ENCODE measurements at regions of chrX and their contacts with region 1.

Region 1: DNA sequence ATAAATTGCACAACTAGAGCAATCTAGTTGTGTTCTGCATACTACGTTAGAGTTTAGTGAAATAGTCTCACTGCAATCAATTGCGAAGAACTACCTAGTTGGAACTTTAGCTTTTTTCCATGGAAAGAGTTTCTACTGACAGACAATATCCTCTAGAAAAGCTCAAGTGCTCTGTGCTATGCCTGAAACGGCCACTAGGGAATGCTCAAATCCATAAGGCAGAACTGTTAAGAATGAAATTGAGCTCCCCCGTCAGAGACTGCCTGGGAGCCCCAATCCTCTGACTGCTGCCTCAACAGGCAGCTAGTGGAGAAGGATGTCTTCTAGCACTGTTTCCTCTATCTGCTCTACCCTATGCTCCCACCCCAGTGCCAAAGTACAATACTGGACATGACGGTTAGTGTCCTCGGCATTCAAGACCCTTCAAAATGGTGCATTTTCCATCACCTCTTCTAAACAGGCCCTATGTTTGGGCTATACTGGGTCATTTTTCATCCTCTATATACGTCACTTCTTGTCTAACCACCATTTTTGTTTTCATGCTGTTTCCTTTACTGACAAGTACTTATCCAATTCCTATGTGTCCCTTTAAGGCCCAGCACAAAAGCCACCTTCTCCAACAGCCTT is 35.3 kb downstream of the FRMD7 start:
- DNase-seq: peak; percentile 8 to 56 (median 30)
- H3K4me3 ChIP-seq: no peak overlapping the region
- H3K4me3 Mint-ChIP-seq: no peak overlapping the region
- H3K27ac ChIP-seq: no peak overlapping the region
- H3K27ac Mint-ChIP-seq: no peak overlapping the region
- H3K4me1 ChIP-seq: no peaks in the 10 kb centered on the region
- H3K4me1 Mint-ChIP-seq: peaks cover 7 to 12% (median 10%) of the 10 kb centered on the region in 3 donors
- H3K27me3 ChIP-seq: no peaks in the 10 kb centered on the region
- H3K27me3 Mint-ChIP-seq: peaks cover 0 to 13% of the 10 kb centered on the region in 2 donors

Region 2: DNA sequence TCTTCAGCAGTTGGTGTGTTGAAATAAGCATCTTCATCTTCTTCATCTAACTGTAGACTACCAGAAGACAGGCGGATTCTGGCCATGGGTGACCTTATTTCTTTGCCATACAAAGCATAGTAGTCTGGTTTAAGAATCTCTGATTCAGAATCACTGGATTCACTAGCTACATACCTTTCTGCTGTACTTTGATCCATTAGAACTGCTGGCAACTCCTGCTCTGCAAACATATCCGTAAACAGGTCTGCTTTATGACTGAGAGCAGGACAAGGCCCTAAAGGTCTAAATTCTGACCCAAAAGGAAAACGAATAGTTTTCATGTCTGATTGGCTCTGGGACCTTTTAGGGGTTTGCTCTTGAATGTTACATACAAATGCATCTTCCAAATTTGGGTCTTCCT is 14.6 kb before region 1 on chrX:
- CTCF ChIA-PET with region 1: no interaction called
- POLR2A ChIA-PET with region 1: no interaction called
- DNase-seq: no peak
- H3K4me3 ChIP-seq: no peak overlapping the region
- H3K4me3 Mint-ChIP-seq: no peak overlapping the region
- H3K27ac ChIP-seq: no peak overlapping the region
- H3K27ac Mint-ChIP-seq: no peak overlapping the region
- H3K4me1 ChIP-seq: no peaks in the 10 kb centered on the region
- H3K4me1 Mint-ChIP-seq: no peaks in the 10 kb centered on the region
- H3K27me3 ChIP-seq: no peaks in the 10 kb centered on the region
- H3K27me3 Mint-ChIP-seq: peaks cover 0 to 6% of the 10 kb centered on the region in 2 donors

Region 3: GRCh38 chrX:132114615-132115014 is 22.1 kb after region 1 on chrX:
- CTCF ChIA-PET with region 1: no interaction called
- POLR2A ChIA-PET with region 1: no interaction called
- DNase-seq: no peak
- H3K4me3 ChIP-seq: no peak overlapping the region
- H3K4me3 Mint-ChIP-seq: no peak overlapping the region
- H3K27ac ChIP-seq: no peak overlapping the region
- H3K27ac Mint-ChIP-seq: no peak overlapping the region
- H3K4me1 ChIP-seq: no peaks in the 10 kb centered on the region
- H3K4me1 Mint-ChIP-seq: no peaks in the 10 kb centered on the region
- H3K27me3 ChIP-seq: no peaks in the 10 kb centered on the region
- H3K27me3 Mint-ChIP-seq: peaks cover 0 to 7% of the 10 kb centered on the region in 2 donors

Region 4: GRCh38 chrX:132219343-132219768 is 126.8 kb after region 1 on chrX and contains the start of gene RAP2C:
- CTCF ChIA-PET with region 1: interaction called, 20 read pairs
- POLR2A ChIA-PET with region 1: no interaction called
- DNase-seq: peak; percentile 41 to 67 (median 50)
- H3K4me3 ChIP-seq: peak within 1 kb of the TSS; percentile 84
- H3K4me3 Mint-ChIP-seq: peak within 1 kb of the TSS; percentile 83 to 95 (median 89)
- H3K27ac ChIP-seq: peak within 1 kb of the TSS; percentile 87
- H3K27ac Mint-ChIP-seq: peak within 1 kb of the TSS; percentile 92 to 100 (median 98)
- H3K4me1 ChIP-seq: peaks cover 19% of the 10 kb centered on the region
- H3K4me1 Mint-ChIP-seq: peaks cover 28 to 39% (median 33%) of the 10 kb centered on the region in 3 donors
- H3K27me3 ChIP-seq: no peaks in the 10 kb centered on the region
- H3K27me3 Mint-ChIP-seq: peaks cover 0 to 10% of the 10 kb centered on the region in 2 donors
- total RNA-seq, gene RAP2C: 33.2 to 34.0 TPM

Measured in CD8-positive, alpha-beta memory T cell (primary cell).